ENCODE measurements at regions of chr7 and their contacts with region 1.

Region 1: DNA sequence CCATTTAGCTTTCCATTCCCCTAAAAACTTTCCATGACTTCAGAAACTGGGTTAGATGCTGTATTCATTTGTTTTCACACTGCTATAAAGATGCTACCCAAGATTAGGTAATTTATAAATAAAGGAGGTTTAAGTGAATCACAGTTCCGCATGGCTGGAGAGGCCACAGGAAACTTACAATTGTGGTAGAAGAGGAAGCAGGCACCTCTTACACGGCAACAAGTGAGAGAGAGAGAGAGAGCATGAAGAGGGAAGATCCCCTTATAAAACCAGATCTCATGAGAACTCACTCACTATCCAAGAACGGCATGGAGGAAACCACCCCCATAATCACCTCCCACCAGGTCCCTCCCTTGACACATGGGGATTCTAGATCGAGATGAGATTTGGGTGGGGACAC is 336.8 kb downstream of the TFEC start:
- H3K4me3 ChIP-seq: no peak overlapping the region
- H3K27ac ChIP-seq: no peak overlapping the region
- H3K4me1 ChIP-seq: no peaks in the 10 kb centered on the region
- CTCF ChIP-seq: no peak

Region 2: GRCh38 chr7:115679976-115680375 is 13.8 kb before region 1 on chr7:
- CTCF ChIA-PET with region 1: interaction called, 12 read pairs
- POLR2A ChIA-PET with region 1: no interaction called
- H3K4me3 ChIP-seq: no peak overlapping the region
- H3K27ac ChIP-seq: no peak overlapping the region
- H3K4me1 ChIP-seq: no peaks in the 10 kb centered on the region
- CTCF ChIP-seq: no peak